Dorsolateral prefrontal cortex (tissue), 120 donors: ENCODE measurements at regions of chr19 and their contacts with region 1.

Region 1: GRCh38 chr19:10699650-10700335 is 1.4 kb upstream of the QTRT1 start:
- DNase-seq: peak in 4 of 10 donors; percentile 31 to 68 (median 57)
- H3K4me3 ChIP-seq: no peak overlapping the region
- H3K27ac ChIP-seq: no peak overlapping the region
- H3K27me3 ChIP-seq: no peaks in the 10 kb centered on the region
- CTCF ChIP-seq: peak; percentile 34 to 74 (median 62)

Region 2: DNA sequence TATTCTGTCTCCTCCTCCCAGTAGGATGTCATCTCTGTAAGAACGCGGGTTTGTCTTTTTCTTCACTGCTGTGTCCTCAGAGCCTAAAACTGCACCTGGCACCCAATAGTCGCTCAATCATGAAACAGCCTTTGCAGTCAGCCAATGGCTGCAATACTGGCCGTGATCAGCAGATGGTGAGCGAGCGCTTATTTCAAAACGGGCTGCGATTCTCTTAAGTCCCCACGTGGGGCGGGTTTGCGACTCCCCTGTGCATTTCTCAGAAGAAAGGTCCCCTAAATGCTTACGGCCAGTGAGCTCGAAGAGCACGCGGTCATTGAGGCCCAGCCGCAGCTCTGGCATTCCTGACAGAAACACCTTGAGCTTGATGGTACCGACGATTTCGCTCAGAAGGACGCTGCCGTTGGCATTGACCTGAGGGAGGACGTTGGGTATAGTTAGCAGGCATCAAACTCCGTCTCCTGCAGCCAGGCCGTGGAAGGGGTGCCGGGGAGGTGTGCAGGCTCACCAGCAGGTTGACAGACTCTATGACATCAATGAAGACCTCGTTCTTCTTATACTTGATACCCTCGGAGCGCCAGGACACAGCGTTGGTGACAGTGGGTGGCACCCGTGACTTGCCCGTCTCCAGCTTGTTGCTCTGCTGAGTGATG is 118.7 kb before region 1 on chr19:
- intact Hi-C with region 1: loop called in 1 of 2 experiments (anchors 2 kb)
- DNase-seq: peak; percentile 85 to 96 (median 90)
- H3K4me3 ChIP-seq: peak overlapping the region in 45 of 59 donors; percentile 2 to 55 (median 38)
- H3K27ac ChIP-seq: no peak overlapping the region
- H3K27me3 ChIP-seq: no peaks in the 10 kb centered on the region
- CTCF ChIP-seq: peak; percentile 94 to 100 (median 99)

Region 3: GRCh38 chr19:10653715-10654492 is 45.9 kb before region 1 on chr19 and contains the start of gene ILF3:
- intact Hi-C with region 1: loop called (anchors 1 to 2 kb)
- DNase-seq: peak; percentile 96 to 99 (median 98)
- H3K4me3 ChIP-seq: peak within 1 kb of the TSS; percentile 80 to 100 (median 97)
- H3K27ac ChIP-seq: peak within 1 kb of the TSS; percentile 92 to 100 (median 98)
- H3K27me3 ChIP-seq: no peaks in the 10 kb centered on the region
- CTCF ChIP-seq: peak in 11 of 56 donors; percentile 9 to 36 (median 15)
- total RNA-seq, gene ILF3: 131 to 221 (median 179) TPM